ENCODE measurements at regions of chr12 and their contacts with region 1.

Region 1: DNA sequence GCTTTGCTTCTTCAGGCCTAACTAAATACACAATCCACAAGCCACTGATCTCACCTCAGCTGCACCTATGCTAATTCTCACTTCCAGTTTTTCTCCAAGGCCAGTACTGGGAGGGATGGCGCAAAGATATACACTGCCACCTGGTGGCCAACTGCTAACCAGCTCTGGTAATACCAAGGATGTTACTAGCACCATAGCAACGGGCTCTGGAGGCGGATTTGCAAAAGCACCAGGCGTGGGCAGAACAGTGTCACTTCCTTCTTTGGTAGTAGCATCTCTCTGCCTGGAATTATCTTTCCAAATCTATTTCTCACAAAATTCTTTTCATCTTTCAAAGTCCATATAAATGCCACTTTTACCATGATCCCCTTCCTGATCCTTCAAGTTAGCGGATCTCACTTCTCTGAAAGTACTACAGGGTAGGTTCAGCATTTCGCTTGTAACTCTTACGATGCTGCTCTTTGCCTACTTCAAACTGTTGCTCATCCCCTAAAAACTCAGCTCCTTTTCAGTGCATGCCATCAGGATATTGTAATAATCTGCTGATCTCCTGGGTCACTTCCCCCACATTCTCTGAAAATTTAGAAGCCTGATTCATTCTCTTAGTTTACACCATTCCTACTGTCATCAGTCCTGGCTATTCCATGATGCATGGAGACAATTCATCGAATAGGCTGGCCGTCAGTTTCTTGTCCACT is 37.1 kb upstream of the FOXJ2 start:
- DNase-seq: peak; percentile 64 to 93 (median 76)
- ATAC-seq: peak; percentile 98
- H3K4me3 ChIP-seq: no peak overlapping the region
- H3K4me3 Mint-ChIP-seq: no peak overlapping the region
- H3K27ac ChIP-seq: no peak overlapping the region
- H3K27ac Mint-ChIP-seq: no peak overlapping the region
- H3K4me1 ChIP-seq: peaks cover 23% of the 10 kb centered on the region
- H3K4me1 Mint-ChIP-seq: peaks cover 12% of the 10 kb centered on the region
- H3K27me3 ChIP-seq: no peaks in the 10 kb centered on the region
- H3K27me3 Mint-ChIP-seq: no peaks in the 10 kb centered on the region
- CTCF ChIP-seq: peak; percentile 77

Region 2: DNA sequence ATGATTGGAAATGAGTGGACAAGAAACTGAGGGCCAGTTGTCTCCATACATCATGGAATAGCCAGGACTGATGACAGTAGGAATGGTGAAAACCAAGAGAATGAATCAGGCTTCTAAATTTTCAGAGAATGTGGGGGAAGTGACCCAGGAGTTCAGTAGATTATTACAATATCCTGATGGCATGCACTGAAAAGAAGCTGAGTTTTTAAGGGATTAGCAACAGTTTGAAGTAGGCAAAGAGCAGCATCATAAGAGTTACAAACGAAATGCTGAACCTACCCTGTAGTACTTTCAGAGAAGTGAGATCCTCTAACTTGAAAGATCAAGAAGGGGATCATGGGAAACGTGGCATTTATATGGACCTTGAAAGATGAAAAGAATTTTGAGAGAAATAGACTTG is 135.9 kb before region 1 on chr12:
- CTCF ChIA-PET with region 1: interaction called, 11 read pairs
- POLR2A ChIA-PET with region 1: interaction called, 3 read pairs
- intact Hi-C with region 1: loop called (anchors 1 kb)
- DNase-seq: no peak
- ATAC-seq: no peak
- H3K4me3 ChIP-seq: no peak overlapping the region
- H3K4me3 Mint-ChIP-seq: no peak overlapping the region
- H3K27ac ChIP-seq: no peak overlapping the region
- H3K27ac Mint-ChIP-seq: no peak overlapping the region
- H3K4me1 ChIP-seq: peaks cover 4% of the 10 kb centered on the region
- H3K4me1 Mint-ChIP-seq: peaks cover 6% of the 10 kb centered on the region
- H3K27me3 ChIP-seq: peaks cover 0 to 3% of the 10 kb centered on the region in 2 experiments
- H3K27me3 Mint-ChIP-seq: no peaks in the 10 kb centered on the region
- CTCF ChIP-seq: no peak

Region 3: DNA sequence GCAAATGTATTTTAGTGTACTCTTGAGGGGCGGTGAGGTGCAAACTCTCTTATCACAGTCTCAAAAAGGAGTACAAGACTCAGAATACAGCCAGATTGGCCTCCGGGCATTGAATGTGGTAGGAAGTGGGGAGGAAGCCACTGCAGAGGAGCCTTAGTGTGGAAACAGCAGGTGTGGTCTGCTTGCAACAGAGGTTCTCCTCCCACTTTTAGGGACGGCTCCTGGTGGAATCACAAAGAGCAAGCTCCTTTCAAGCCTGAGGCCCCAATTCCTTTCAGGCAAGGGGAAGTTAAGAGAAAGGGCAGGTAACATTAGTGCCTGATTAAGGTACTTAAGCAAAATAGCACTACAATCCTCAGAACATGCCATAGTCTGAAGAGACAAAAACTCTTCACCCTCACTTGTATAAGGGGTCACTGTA is 35.7 kb before region 1 on chr12:
- CTCF ChIA-PET with region 1: interaction called, 21 read pairs
- POLR2A ChIA-PET with region 1: interaction called, 27 read pairs
- intact Hi-C with region 1: loop called (anchors 1 to 2 kb)
- DNase-seq: peak in 13 of 14 experiments; percentile 22 to 77 (median 37)
- ATAC-seq: peak; percentile 24
- H3K4me3 ChIP-seq: peak overlapping the region; percentile 64
- H3K4me3 Mint-ChIP-seq: peak overlapping the region; percentile 87
- H3K27ac ChIP-seq: peak overlapping the region; percentile 59 to 76
- H3K27ac Mint-ChIP-seq: peak overlapping the region; percentile 90
- H3K4me1 ChIP-seq: peaks cover 23% of the 10 kb centered on the region
- H3K4me1 Mint-ChIP-seq: peaks cover 34% of the 10 kb centered on the region
- H3K27me3 ChIP-seq: no peaks in the 10 kb centered on the region
- H3K27me3 Mint-ChIP-seq: no peaks in the 10 kb centered on the region
- CTCF ChIP-seq: no peak

Region 4: DNA sequence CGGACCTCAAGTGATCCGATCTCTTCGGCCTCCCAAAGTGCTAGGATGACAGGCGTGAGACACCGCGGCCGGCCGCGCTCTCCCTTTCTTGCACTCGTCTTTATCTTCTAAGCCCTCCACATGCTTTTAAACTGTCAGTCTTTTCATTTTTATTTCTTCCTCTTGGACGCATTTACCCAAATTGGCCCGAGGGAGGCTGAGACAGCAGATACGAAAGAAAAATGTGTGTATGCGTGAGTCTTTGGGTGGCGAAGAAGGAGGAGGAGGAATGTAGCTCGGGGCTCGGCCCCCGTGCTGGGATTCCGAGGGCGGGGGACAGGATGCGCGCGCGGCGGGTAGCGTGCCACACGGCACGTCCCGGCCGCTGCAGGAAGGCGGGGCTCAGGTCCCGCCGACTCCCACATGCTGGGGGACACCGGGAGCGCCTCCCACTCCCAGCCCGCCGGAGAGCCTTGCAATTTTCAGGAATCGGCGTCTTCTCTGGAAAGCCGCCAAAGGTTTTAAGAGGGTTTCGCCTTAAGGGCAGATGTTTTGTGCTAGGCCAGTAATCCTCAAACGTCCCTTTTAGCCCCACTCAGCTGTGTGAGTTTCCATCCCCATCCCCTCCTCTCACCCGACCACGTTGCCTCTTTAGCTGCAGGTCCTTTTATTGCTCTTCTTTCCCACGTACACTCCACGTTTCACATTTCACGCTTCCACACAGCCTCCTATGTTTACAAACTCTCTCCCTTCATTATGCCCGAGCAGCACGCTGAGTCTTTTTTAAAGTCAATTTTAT is 24.8 kb before region 1 on chr12:
- CTCF ChIA-PET with region 1: interaction called, 12 read pairs
- POLR2A ChIA-PET with region 1: interaction called, 9 read pairs
- intact Hi-C with region 1: loop called (anchors 1 to 2 kb)
- DNase-seq: peak; percentile 69 to 95 (median 80)
- ATAC-seq: peak; percentile 83
- H3K4me3 ChIP-seq: peak overlapping the region; percentile 68
- H3K4me3 Mint-ChIP-seq: peak overlapping the region; percentile 88
- H3K27ac ChIP-seq: peak overlapping the region; percentile 76 to 87
- H3K27ac Mint-ChIP-seq: peak overlapping the region; percentile 94
- H3K4me1 ChIP-seq: peaks cover 25% of the 10 kb centered on the region
- H3K4me1 Mint-ChIP-seq: peaks cover 30% of the 10 kb centered on the region
- H3K27me3 ChIP-seq: no peaks in the 10 kb centered on the region
- H3K27me3 Mint-ChIP-seq: no peaks in the 10 kb centered on the region
- CTCF ChIP-seq: no peak

Measured in CD4-positive, alpha-beta T cell (primary cell).